Cardiac septum (tissue), 1 donor: ENCODE measurements at regions of chr6 and their contacts with region 1.

Region 1: DNA sequence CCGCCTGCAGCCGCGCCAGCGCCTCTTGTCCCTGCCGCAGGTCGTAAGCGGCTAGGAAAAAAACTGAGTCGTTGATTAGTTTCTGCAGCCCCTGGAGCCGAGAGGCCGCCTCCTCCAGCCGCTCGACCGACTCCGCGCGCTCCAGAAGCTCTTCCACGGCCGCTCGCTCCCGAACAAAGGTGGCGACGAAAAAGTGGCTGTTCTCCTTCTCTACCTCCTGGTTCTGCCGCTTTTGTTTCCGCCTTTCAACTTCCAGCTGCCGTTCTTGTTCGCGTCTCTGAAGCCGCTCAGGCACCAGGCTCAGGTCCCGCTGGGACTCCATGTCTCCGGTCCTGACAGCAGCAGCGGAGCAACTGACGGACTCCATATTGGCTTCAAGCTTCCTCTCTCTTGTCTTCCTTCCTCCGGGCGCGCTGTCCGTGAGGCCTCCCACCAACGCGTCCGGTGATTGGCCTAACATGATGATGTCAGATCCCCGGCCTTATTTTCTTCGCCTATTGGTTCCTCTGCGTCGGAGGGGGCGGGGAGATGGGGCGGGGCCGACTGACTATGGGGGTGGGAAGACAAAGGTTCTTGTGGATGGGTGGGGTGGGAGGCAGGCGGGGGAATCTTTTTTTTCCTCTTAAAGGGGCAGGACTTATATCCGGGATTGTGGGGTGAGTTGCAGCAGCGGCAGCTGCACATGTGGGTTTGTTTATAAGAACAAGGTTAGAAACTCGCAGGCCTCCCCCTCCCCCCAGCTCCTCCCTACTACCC is at the start of gene TBCC:
- DNase-seq: peak; percentile 97
- total RNA-seq, gene TBCC: 11.0 TPM

Region 2: GRCh38 chr6:42766141-42766670 is 20.3 kb after region 1 on chr6:
- intact Hi-C with region 1: no loop called
- DNase-seq: no peak

Region 3: DNA sequence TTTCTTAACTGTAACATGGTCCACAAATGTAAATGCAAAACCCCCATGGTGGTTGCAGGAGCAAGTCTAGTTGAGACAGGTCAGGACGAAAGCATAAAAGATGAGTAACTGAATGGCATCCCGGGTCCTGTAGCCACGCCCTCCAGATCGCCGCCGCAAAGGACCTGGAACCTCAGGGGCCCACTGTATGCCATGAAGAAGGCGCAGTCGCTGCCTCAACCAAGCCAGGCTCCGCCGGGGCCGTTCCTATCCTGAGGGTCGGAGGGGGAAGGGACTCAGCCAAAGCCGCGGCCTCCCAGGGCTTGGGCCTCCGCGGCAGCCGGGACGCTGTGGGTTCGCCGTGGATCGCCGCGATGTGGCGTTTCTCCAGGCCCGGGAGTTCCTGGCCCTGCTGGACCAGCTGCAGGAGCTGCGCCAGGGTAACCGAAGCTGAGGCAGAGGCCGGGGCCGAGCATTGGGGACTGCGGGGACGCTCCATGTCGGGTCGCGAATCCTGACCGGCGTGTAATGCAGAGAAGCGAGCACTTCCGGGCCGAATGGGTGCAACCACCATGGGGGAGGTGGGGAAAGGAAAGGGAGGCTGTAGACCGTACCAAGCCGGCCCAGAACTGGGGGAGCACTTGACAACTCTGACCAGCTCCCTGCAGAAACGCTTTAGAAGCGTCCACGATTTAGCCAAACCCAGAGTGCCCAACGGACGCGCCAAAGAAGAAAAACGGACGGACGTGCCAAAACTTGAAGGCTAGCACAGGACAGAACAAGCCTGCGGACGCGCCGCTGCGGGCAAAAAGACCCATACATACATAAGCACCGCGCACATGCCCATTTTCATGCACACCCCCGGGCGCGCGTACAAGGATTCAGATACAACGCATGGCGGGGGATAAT is 144.7 kb after region 1 on chr6:
- intact Hi-C with region 1: loop called (anchors 5 kb)
- DNase-seq: peak; percentile 98